ENCODE measurements at regions of chr22 and their contacts with region 1.

Region 1: GRCh38 chr22:36775964-36776669 is at the start of gene IFT27:
- DNase-seq: peak; percentile 100
- H3K4me3 ChIP-seq: peak within 1 kb of the TSS; percentile 79 to 96
- H3K27ac ChIP-seq: peak within 1 kb of the TSS; percentile 86 to 88
- H3K4me1 ChIP-seq: peaks cover 0 to 13% (median 10%) of the 10 kb centered on the region in 4 donors
- H3K27me3 ChIP-seq: no peaks in the 10 kb centered on the region
- CTCF ChIP-seq: peak in 1 of 2 experiments; percentile 21

Region 2: DNA sequence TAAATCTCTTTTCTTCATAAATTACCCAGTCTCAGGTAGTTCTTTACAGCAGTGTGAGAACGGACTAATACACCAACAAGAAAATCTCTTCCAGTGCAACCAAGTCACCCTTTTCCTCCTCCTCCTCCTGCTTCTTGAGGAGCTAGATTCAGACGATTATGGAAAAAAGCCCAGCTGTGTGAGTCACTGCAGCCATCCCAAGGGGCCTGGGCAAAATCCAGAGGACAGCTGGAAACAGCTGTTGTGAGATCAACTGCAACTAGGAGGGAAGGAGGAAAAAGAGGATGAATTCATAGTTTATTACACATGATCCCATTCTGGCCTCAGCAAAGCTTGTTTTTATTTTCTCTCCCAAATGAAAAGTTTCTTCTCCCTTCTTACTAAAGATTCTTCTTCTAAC is 780.3 kb before region 1 on chr22:
- intact Hi-C with region 1: no loop called
- DNase-seq: peak; percentile 80 to 93
- H3K4me3 ChIP-seq: no peak overlapping the region
- H3K27ac ChIP-seq: peak overlapping the region; percentile 74 to 76
- H3K4me1 ChIP-seq: peaks cover 0 to 33% (median 21%) of the 10 kb centered on the region in 4 donors
- H3K27me3 ChIP-seq: no peaks in the 10 kb centered on the region
- CTCF ChIP-seq: no peak

Region 3: DNA sequence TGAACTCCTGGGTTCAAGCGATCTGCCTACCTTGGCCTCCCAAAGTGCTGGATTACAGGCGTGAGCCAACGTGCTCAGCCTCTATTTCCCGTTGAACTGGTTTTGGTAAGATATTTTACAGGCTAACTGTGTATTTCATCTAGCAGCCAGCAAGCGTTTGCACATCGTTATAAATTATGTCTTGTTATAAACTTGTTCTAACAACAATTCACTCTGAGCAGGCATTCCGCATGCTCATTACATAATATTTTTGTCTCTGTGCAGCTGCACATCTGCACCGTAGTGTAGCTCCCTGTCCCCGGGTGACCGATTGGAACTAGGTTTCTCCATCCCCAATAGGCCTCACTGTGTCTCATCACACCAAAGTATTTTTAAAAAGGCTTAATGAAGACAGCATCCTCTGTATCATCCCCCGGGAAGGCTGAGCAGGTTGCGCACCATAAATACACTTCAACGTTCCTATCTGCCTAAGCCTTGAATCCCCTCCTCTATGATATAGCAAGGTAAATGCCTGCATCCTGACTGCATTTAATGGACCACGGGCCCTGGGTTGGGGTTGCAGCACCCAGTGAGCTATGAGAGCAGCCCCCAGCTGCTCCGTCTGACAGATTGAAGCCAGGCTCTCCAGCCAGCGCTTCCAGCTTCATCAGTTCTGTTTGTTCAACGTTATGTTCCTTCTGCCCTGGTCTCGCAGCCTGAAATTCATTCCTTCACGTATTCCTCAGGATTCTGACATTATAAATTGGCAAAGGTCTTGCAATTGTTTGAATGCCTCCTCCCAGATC is 195.4 kb after region 1 on chr22:
- intact Hi-C with region 1: loop called (anchors 5 kb)
- DNase-seq: no peak
- H3K4me3 ChIP-seq: no peak overlapping the region
- H3K27ac ChIP-seq: no peak overlapping the region
- H3K4me1 ChIP-seq: no peaks in the 10 kb centered on the region
- H3K27me3 ChIP-seq: peaks cover 0 to 5% of the 10 kb centered on the region in 2 donors
- CTCF ChIP-seq: no peak

Region 4: DNA sequence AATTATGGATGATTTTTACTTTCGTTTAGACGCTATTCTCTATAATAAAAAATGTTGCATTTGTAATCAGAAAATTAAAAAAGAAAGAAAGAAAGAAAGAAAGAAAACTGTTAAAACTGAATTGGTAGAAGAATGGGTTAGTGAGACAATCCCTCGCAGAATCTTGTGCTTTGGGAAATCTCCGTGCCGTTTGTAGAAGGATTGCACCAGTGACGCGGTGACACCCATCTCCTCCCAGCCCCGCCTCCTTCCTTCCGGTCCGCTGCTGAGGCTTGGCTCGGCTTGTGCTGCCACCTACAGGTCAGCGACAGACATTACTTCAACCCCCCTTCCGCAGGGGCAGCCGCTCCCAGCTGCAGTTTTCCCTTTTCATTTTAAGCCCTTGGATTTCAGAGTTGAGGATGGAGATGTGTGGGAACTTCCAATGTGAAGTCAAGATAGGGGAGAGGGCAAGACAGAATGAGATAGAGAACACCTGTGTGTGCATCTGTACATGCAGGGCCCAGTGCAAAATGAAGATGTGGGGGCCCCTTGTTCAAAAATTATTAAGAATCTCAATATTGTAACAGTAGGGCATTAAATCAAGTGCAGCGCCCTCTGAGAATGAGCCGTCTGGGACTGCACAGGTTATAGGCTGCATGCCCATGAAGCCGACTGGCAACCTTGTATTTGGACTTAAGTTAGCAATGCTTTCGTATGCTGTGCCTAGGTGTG is 202.0 kb after region 1 on chr22:
- intact Hi-C with region 1: loop called (anchors 5 kb)
- DNase-seq: peak; percentile 90 to 92
- H3K4me3 ChIP-seq: peak overlapping the region; percentile 42 to 44
- H3K27ac ChIP-seq: no peak overlapping the region
- H3K4me1 ChIP-seq: peaks cover 0 to 6% (median 4%) of the 10 kb centered on the region in 4 donors
- H3K27me3 ChIP-seq: peaks cover 0 to 33% of the 10 kb centered on the region in 2 donors
- CTCF ChIP-seq: peak; percentile 93 to 94